Right cardiac atrium (tissue), 5 donors: ENCODE measurements at regions of chr6 and their contacts with region 1.

Region 1: DNA sequence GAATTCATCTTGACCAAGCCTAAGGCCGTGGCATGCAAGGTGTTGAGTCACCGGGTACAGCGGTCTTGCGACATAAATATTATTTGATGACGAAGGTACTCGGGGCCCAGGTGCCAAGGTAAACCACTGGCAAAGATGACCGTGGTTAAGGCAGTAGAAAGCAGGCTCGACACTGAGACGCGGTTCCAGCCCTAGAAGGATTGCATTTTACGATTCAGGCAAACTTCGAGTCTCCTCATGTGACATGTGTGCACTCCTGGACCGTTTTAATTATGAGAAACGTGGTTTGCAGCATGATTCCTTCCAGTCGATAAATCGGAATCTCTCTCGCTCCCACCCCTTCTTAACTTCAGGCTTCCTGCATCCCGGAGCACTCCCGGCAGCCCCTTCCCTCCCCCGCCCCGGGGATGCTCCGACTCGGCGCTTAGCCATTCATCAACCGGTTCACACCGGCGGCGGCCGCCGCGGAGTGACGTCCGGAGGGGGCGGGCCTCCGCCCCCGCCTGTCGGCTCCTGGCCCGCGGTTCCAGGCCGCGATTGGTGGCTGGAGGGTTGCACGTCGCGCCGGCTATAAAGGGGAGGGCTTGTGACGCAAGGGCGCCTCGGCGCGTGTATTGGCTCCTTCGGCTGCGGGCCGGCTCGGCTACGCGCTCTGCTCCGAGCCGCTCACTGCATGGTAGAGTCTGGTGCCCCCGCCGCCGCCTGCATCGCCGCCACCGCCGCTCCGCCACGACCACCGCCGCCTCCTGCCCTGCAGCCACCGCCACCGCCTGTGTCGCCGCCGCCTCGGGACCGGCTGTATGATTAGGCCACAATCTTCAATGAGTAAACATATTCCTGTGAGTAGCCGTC is at the starts of genes LOC128125822 and PTP4A1:
- DNase-seq: peak; percentile 98 to 99 (median 99)
- ATAC-seq: peak; percentile 98
- H3K4me3 ChIP-seq: peak within 1 kb of the TSS; percentile 89
- H3K27ac ChIP-seq: peak within 1 kb of the TSS; percentile 99
- H3K4me1 ChIP-seq: no peaks in the 10 kb centered on the region
- H3K27me3 ChIP-seq: no peaks in the 10 kb centered on the region
- total RNA-seq, gene PTP4A1: 20.0 to 34.6 (median 26.7) TPM

Region 2: DNA sequence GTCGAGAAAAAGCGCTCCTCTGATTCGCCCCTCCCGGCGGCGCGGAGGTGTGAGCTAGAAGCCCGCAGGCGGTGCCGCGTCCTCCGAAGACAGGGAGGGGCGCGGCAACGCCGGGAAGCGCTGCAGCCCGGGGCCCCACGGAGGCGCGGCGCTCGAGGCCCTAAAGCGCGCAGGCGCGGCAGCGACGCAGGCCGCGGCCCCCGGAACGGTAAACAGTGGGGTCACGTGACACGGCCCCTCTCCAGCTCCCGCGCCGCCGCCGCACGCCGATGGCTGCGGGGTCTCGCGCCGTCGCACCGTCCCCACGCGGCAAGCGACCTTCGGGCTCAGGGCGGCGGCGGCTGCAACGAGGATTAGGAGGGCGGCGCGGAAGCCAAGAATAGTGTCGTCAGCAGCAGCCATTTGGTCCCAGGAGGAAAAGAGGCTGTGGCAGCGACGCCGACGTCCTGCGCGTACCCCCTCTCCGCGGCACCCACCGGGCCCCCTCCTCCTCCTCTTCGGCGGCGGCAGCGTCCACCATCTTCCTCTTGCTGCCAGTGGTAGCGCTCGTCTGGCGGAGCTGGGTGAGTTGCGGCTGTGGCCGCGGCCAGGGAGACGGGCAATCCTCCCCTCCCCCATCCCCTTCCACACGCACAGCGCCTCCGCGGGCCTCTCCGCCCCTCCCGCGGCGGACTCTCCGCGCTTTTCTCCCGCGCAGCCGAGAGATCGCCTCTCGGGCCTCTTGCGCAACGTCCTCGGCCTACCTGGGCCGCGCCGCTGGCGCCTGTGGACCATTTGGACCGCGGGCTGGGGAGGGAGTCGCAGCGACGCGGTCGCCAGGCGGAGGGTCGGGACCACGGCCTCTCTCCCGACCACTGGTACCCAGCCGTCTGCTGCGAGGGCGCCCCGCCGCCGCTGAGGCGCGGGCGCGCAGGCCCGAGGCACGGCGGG is 63.7 kb after region 1 on chr6 and contains the start of gene PHF3:
- intact Hi-C with region 1: loop called in 1 of 4 experiments (anchors 10 kb)
- DNase-seq: peak; percentile 92 to 97 (median 96)
- ATAC-seq: peak; percentile 98 to 99
- H3K4me3 ChIP-seq: peak within 1 kb of the TSS; percentile 64
- H3K27ac ChIP-seq: peak within 1 kb of the TSS; percentile 62
- H3K4me1 ChIP-seq: no peaks in the 10 kb centered on the region
- H3K27me3 ChIP-seq: no peaks in the 10 kb centered on the region
- total RNA-seq, gene PHF3: 31.6 to 42.3 (median 39.7) TPM